Activated CD8-positive, alpha-beta T cell treated with anti-CD3 and anti-CD28 coated beads, Interleukin-2, amount 10 ng/mL, durations not matched to agents 7 days and 5 days (primary cell): ENCODE measurements at regions of chr3 and their contacts with region 1.

Region 1: DNA sequence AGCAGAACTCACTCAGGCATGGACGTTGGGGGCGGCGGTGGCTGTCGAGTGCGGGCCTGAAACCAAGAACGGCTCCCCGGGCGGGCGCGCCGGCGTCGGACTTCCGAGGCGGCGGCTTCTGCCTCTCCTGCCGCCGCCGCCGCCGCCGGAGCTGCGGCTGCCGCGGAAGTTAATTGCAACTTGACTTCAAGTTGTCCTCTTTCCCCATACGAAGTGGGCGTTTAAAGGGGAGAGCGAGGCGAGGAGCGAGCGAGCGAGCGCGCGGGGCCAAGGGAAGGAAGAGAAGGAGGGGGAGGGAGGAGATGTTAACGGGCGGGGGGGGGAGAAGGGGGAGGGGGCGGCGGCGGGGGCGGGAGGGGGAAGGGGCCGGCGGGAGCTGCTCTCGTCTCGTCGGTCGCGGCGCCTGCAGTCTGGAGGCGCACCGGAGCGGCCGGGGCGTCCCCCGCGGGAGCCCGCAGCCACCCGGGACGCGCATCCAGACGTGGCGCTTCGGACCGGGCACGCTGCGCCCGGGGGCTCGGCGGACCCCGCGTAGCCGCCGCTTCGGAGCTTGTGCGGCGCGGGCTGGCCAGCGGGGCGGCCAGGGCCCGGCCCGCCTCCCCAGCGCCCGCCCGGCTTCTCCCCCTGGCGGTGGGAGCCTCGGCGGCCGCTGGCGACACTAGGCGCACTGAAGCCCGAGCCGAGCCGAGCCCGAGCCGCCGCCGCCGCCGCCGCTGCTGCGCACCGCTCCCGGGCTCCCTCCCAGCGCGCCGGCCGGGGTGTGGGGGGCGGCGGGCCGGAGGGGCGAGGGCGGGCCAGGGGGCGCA is 19.7 kb upstream of the SATB1 start:
- DNase-seq: peak; percentile 87
- ATAC-seq: peak; percentile 79
- H3K4me3 Mint-ChIP-seq: peak overlapping the region; percentile 93
- H3K27ac Mint-ChIP-seq: peak overlapping the region; percentile 95
- H3K4me1 Mint-ChIP-seq: peaks cover 45% of the 10 kb centered on the region
- H3K27me3 Mint-ChIP-seq: no peaks in the 10 kb centered on the region

Region 2: GRCh38 chr3:18246336-18247060 is 198.3 kb before region 1 on chr3:
- CTCF ChIA-PET with region 1: no interaction called
- POLR2A ChIA-PET with region 1: no interaction called
- DNase-seq: no peak
- ATAC-seq: no peak
- H3K4me3 Mint-ChIP-seq: no peak overlapping the region
- H3K27ac Mint-ChIP-seq: no peak overlapping the region
- H3K4me1 Mint-ChIP-seq: no peaks in the 10 kb centered on the region
- H3K27me3 Mint-ChIP-seq: peaks cover 5% of the 10 kb centered on the region

Region 3: GRCh38 chr3:18389108-18389733 is 55.6 kb before region 1 on chr3:
- CTCF ChIA-PET with region 1: no interaction called
- POLR2A ChIA-PET with region 1: no interaction called
- DNase-seq: peak; percentile 39
- ATAC-seq: peak; percentile 21
- H3K4me3 Mint-ChIP-seq: no peak overlapping the region
- H3K27ac Mint-ChIP-seq: no peak overlapping the region
- H3K4me1 Mint-ChIP-seq: peaks cover 77% of the 10 kb centered on the region
- H3K27me3 Mint-ChIP-seq: no peaks in the 10 kb centered on the region

Region 4: GRCh38 chr3:18419232-18419631 is 25.6 kb before region 1 on chr3:
- CTCF ChIA-PET with region 1: interaction called, 10 read pairs
- POLR2A ChIA-PET with region 1: interaction called, 106 read pairs
- DNase-seq: no peak
- ATAC-seq: no peak
- H3K4me3 Mint-ChIP-seq: peak overlapping the region; percentile 73
- H3K27ac Mint-ChIP-seq: peak overlapping the region; percentile 86
- H3K4me1 Mint-ChIP-seq: peaks cover 78% of the 10 kb centered on the region
- H3K27me3 Mint-ChIP-seq: no peaks in the 10 kb centered on the region

Region 5: DNA sequence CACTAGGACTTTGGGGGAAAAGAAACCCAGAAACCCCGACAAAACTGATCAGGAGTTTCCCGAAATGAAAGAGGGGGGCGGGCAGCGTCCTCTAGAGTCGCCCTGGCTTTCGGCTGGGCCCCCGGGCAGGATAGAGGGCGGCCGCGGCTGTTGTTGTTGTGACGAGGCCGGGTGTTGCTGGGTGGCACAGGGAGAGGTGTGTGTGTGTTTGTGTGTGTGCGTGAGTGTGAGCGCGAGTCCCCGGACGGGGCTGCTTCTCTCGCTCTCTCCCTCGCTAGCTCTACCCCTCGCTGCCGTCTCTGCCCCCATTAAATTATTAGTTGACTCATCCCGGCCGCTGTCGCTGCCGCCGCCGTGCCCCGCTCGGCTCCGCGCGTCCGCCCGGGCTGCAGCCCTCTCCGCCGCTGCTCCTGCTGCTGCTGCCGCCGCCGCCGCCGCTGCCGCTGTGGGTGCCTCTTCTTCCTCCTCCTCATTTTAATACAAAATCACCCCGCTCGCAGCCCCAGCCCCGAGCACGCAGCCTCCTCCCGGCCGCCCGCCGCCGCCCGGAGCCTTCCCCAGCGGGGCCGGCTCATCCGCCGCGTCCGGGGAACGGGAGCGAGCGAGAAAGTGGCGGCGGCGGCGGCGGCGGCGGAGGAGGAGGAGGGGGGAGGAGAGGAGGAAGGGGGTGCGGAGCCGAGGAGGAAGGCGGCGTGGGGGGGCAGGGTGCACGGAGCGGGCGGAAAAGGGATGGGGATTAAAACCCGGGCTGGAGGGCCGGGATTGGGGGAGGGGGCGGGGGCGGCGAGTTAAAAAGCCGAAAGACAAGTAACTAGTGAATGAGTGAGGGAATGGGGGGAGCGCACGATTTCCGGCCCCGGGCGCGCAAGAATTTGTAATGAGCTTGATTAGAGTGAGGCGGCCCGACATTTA is 19.8 kb before region 1 on chr3 and contains the start of gene SATB1:
- CTCF ChIA-PET with region 1: interaction called, 22 read pairs
- POLR2A ChIA-PET with region 1: interaction called, 106 read pairs
- DNase-seq: peak; percentile 79
- ATAC-seq: peak; percentile 23
- H3K4me3 Mint-ChIP-seq: peak within 1 kb of the TSS; percentile 87
- H3K27ac Mint-ChIP-seq: peak within 1 kb of the TSS; percentile 88
- H3K4me1 Mint-ChIP-seq: peaks cover 60% of the 10 kb centered on the region
- H3K27me3 Mint-ChIP-seq: no peaks in the 10 kb centered on the region
- total RNA-seq, gene SATB1: 268 to 273 TPM

Region 6: DNA sequence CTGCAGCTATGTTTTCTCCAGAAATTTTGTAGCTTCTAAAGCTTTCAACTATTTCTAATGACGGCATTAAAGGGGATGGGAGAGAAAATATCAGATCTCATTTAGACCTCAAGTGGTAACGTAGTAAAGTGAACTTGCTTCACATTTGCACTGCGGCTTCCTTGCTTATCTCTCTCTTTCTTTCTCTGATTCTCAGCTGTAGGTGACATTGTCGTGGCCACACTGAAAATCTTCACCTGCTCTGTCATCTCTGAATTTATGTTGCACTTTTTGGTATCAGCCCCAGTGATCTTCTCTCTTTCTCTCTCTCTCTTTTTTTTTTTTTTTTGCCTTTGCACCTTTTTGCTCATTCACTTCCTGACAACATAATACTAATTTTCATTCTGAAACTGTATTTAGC is 234.4 kb after region 1 on chr3:
- CTCF ChIA-PET with region 1: interaction called, 4 read pairs
- POLR2A ChIA-PET with region 1: interaction called, 12 read pairs
- DNase-seq: peak; percentile 66
- ATAC-seq: peak; percentile 80
- H3K4me3 Mint-ChIP-seq: peak overlapping the region; percentile 56
- H3K27ac Mint-ChIP-seq: peak overlapping the region; percentile 87
- H3K4me1 Mint-ChIP-seq: peaks cover 68% of the 10 kb centered on the region
- H3K27me3 Mint-ChIP-seq: no peaks in the 10 kb centered on the region

Region 7: DNA sequence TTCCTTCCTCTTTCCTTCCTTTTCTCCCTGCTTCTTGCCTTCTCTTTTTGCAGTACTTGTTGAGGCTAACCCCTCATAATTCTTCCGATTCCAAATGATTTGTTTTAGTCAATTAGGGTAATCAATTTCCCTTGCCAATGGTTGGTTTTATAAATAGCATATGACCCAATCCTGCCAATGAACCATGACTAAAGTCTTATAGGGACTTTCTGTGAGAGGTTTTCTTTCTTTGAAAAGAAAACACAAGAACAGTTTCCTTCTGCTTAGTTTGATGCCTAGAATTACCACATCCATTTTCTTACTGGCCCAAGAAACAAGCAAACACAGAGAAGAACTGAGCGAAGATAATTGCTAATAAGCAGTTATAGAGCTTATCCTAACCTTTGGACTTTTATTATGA is 272.8 kb after region 1 on chr3:
- CTCF ChIA-PET with region 1: interaction called, 4 read pairs
- POLR2A ChIA-PET with region 1: interaction called, 55 read pairs
- DNase-seq: no peak
- ATAC-seq: peak; percentile 11
- H3K4me3 Mint-ChIP-seq: peak overlapping the region; percentile 36
- H3K27ac Mint-ChIP-seq: peak overlapping the region; percentile 95
- H3K4me1 Mint-ChIP-seq: peaks cover 75% of the 10 kb centered on the region
- H3K27me3 Mint-ChIP-seq: no peaks in the 10 kb centered on the region

Region 8: GRCh38 chr3:18740631-18741583 is 296.1 kb after region 1 on chr3:
- CTCF ChIA-PET with region 1: interaction called, 5 read pairs
- POLR2A ChIA-PET with region 1: interaction called, 25 read pairs
- DNase-seq: peak; percentile 72
- ATAC-seq: peak; percentile 72
- H3K4me3 Mint-ChIP-seq: peak overlapping the region; percentile 76
- H3K27ac Mint-ChIP-seq: peak overlapping the region; percentile 92
- H3K4me1 Mint-ChIP-seq: peaks cover 87% of the 10 kb centered on the region
- H3K27me3 Mint-ChIP-seq: no peaks in the 10 kb centered on the region